H1 (cell line): ENCODE measurements at regions of chr5 and their contacts with region 1.

Region 1: DNA sequence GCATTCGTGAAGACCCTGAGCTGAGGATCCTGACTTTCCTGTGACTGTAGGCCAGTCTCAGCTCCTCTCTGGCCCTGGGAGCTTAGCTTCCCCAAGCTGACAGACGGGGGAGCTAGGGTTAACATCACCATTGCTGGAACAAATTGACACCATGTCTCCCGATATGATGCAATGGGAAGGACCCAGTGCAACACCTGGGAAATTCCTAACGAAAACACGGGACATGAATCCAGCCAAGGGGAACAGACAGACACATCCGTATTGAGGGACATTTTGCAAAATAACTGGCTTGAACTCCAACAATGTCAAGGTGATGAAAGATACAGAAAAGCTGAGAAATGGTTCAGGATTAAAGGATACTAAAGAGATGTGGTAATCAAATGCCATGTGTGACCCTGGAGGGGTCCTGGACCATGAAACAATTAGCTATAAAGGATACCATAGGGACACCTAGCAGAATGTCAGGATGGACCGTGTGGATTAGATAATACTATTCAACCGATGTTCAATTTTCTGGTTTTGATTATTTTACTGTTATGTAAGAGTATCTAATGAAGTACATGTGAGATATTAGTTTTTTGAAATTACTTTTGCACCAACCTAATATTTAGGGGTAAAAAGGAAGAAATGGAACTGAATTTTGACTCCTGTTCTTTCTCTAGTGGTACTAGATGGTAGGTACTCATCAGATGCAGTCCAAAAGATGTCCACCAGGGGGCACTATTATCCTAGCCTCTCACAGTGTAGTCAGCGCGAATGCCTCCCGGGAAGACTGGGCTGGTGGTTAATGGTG is 52.7 kb downstream of the NDST1 start:
- DNase-seq: peak; percentile 56 to 96
- H3K4me3 ChIP-seq: peak overlapping the region in 1 of 4 experiments; percentile 23; a peak in 1 of 8 replicates
- H3K27ac ChIP-seq: 0 out of 2 replicates have a peak overlapping the region, but pooled peaks have one; percentile 2
- H3K4me1 ChIP-seq: peaks cover 2 to 9% (median 4%) of the 10 kb centered on the region in 4 experiments
- H3K27me3 ChIP-seq: no peaks in the 10 kb centered on the region
- CTCF ChIP-seq: peak; percentile 50 to 91 (median 82)
- EP300 ChIP-seq: peak in 1 of 2 experiments; percentile 20; a peak in 1 of 3 replicates
- POLR2A ChIP-seq: no peak
- RAD21 ChIP-seq: peak; percentile 93 to 94

Region 2: GRCh38 chr5:150409638-150410523 is 150.7 kb before region 1 on chr5:
- CTCF ChIA-PET with region 1: interaction called, 13 read pairs
- POLR2A ChIA-PET with region 1: no interaction called
- DNase-seq: peak; percentile 44 to 80
- H3K4me3 ChIP-seq: peak overlapping the region; percentile 9 to 37 (median 29); a peak in 6 of 8 replicates
- H3K27ac ChIP-seq: no peak overlapping the region
- H3K4me1 ChIP-seq: peaks cover 8 to 27% (median 13%) of the 10 kb centered on the region in 4 experiments
- H3K27me3 ChIP-seq: no peaks in the 10 kb centered on the region
- CTCF ChIP-seq: no peak
- EP300 ChIP-seq: no peak
- POLR2A ChIP-seq: no peak
- RAD21 ChIP-seq: no peak

Region 3: GRCh38 chr5:150486402-150487198 is 74.0 kb before region 1 on chr5:
- CTCF ChIA-PET with region 1: interaction called, 13 read pairs
- POLR2A ChIA-PET with region 1: interaction called, 5 read pairs
- DNase-seq: peak; percentile 63 to 86
- H3K4me3 ChIP-seq: peak overlapping the region; percentile 50 to 99 (median 74)
- H3K27ac ChIP-seq: peak overlapping the region; percentile 35; the same call in 1 of the 2 replicates
- H3K4me1 ChIP-seq: peaks cover 18 to 51% (median 41%) of the 10 kb centered on the region in 4 experiments
- H3K27me3 ChIP-seq: no peaks in the 10 kb centered on the region
- CTCF ChIP-seq: peak in 1 of 3 experiments; percentile 24; a peak in 2 of 4 replicates
- EP300 ChIP-seq: peak in 1 of 2 experiments; percentile 18; a peak in 1 of 3 replicates
- POLR2A ChIP-seq: peak in 1 of 2 experiments; percentile 14; a peak in 1 of 3 replicates
- RAD21 ChIP-seq: peak in 1 of 2 experiments; percentile 25; a peak in 1 of 4 replicates

Region 4: GRCh38 chr5:150573867-150574817 is 13.5 kb after region 1 on chr5:
- CTCF ChIA-PET with region 1: interaction called, 98 read pairs
- POLR2A ChIA-PET with region 1: interaction called, 3 read pairs
- DNase-seq: no peak
- H3K4me3 ChIP-seq: no peak overlapping the region
- H3K27ac ChIP-seq: no peak overlapping the region
- H3K4me1 ChIP-seq: no peaks in the 10 kb centered on the region
- H3K27me3 ChIP-seq: no peaks in the 10 kb centered on the region
- CTCF ChIP-seq: peak; percentile 22 to 60 (median 43)
- EP300 ChIP-seq: no peak
- POLR2A ChIP-seq: no peak
- RAD21 ChIP-seq: no peak; a peak in 1 of 4 replicates

Region 5: DNA sequence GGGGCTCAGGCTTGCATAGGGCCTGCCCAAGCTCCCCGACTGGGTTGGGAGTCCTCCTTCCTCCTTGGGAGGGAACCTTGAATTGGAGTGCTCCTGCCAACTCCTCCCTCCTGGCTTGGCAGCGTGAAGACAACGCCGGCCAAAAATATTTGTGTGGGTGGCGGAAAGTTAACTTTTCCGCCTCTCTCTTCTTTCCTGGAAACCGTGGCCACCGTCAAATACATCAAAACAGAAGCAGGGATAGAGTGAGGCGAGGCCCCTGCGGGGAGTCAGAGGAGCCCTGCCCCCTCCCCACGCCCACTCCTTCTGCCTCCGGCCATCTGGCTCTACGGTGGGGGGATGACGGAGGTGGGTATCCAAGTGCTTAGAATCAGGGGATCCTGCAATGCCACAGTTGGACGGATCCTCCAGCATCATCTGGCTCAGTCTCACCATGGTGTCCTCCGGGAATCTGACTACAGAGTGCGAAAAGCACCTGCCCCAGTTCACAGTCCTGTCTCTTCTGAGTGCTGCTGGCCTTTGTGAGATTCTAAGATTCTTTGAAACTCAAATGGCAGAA is 54.6 kb after region 1 on chr5:
- CTCF ChIA-PET with region 1: interaction called, 43 read pairs
- POLR2A ChIA-PET with region 1: interaction called, 3 read pairs
- DNase-seq: no peak
- H3K4me3 ChIP-seq: no peak overlapping the region
- H3K27ac ChIP-seq: no peak overlapping the region
- H3K4me1 ChIP-seq: peaks cover 0 to 16% (median 9%) of the 10 kb centered on the region in 4 experiments; a peak in 4 of 7 replicates
- H3K27me3 ChIP-seq: no peaks in the 10 kb centered on the region; a peak in 2 of 7 replicates
- CTCF ChIP-seq: no peak
- EP300 ChIP-seq: no peak
- POLR2A ChIP-seq: no peak
- RAD21 ChIP-seq: no peak

Region 6: GRCh38 chr5:150700594-150701293 is 140.1 kb after region 1 on chr5 and contains the start of gene RBM22:
- CTCF ChIA-PET with region 1: interaction called, 43 read pairs
- POLR2A ChIA-PET with region 1: interaction called, 13 read pairs
- DNase-seq: peak; percentile 76 to 94
- H3K4me3 ChIP-seq: peak within 1 kb of the TSS; percentile 85 to 96 (median 90)
- H3K27ac ChIP-seq: peak within 1 kb of the TSS; percentile 99
- H3K4me1 ChIP-seq: peaks cover 0 to 7% (median 2%) of the 10 kb centered on the region in 4 experiments; a peak in 4 of 7 replicates
- H3K27me3 ChIP-seq: no peaks in the 10 kb centered on the region
- CTCF ChIP-seq: peak; percentile 25 to 49 (median 39)
- EP300 ChIP-seq: peak in 1 of 2 experiments; percentile 81; a peak in 2 of 3 replicates
- POLR2A ChIP-seq: peak; percentile 89 to 97
- RAD21 ChIP-seq: no peak; a peak in 1 of 4 replicates
- total RNA-seq, gene RBM22: 33.9 and 34.0 TPM in 2 replicates

Region 7: DNA sequence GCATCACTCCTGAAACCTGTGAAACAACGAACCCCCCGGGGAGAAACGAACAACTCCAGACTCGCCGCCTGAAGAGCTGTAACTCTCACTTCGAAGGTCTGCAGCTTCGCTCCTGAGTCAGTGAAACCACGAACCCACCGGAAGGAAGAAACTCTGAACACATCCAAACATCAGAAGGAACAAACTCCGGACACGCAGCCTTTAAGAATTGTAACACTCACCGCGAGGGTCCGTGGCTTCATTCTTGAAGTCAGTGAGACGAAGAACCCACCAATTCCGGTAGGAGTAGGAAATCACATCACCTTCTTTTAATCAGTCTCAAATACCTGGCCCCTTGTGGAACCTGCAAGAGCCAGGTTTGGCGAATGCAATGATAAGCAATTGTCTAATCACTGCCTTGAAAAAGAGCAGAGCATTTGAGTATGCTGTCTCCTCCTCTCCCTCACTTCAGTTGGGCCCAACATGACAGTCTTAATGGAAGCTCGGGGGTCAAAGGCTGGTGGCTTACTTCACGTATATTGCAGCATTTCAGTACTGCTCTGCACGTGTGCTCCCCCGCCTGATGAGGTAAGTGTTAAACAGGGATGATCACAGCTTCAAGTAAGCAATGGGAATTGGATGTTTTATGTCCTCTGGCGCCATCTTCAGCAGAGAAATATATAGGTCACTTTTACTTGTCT is 286.2 kb after region 1 on chr5:
- CTCF ChIA-PET with region 1: interaction called, 33 read pairs
- POLR2A ChIA-PET with region 1: interaction called, 4 read pairs
- DNase-seq: peak; percentile 27 to 51
- H3K4me3 ChIP-seq: no peak overlapping the region
- H3K27ac ChIP-seq: no peak overlapping the region
- H3K4me1 ChIP-seq: peaks cover 0 to 3% (median 0%) of the 10 kb centered on the region in 4 experiments; a peak in 1 of 7 replicates
- H3K27me3 ChIP-seq: peaks cover 0 to 5% (median 4%) of the 10 kb centered on the region in 4 experiments; a peak in 4 of 7 replicates
- CTCF ChIP-seq: peak in 2 of 3 experiments; percentile 80; a peak in 3 of 4 replicates
- EP300 ChIP-seq: no peak
- POLR2A ChIP-seq: no peak
- RAD21 ChIP-seq: peak; percentile 89 to 93